ENCODE measurements at regions of chr15 and their contacts with region 1.

Region 1: DNA sequence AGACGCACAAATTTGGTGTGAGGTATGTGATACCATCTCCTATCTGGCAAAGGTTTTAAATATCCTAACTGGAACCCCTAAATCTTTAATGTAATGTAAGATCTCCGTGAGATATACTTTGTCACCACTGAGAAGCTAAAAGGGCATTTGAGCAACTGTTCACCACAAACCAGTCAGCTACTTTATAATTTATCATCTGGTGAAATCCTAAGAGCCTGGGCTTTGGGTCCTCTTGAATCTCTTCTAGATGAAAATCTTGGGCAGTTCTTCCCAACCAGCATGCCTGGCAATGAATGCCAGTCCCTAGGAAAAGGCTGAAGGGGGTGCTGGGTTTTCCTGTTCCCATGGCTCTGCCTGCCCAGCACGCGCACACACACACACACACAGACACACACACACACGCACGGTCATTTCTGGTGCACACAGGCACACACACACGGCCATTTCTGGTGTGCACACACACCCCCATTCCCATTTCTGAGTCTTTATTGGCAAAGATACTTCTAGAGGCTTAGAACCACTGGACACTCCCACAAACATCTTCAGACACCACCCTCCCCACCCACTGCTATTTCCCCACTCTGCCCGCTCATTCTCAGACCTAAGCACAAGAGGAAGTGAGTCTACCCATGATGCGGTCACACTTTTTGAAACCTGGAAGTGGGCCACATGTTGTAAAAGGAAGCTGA is 72.6 kb downstream of the MYO1E start:
- DNase-seq: peak; percentile 34 to 79 (median 62)
- ATAC-seq: peak; percentile 95 to 99 (median 98)
- H3K4me3 ChIP-seq: peak overlapping the region in 1 of 2 donors; percentile 4
- H3K4me3 Mint-ChIP-seq: peak overlapping the region; percentile 29 to 75 (median 50)
- H3K27ac ChIP-seq: peak overlapping the region; percentile 25
- H3K27ac Mint-ChIP-seq: peak overlapping the region; percentile 24 to 46
- H3K4me1 ChIP-seq: peaks cover 9 to 22% of the 10 kb centered on the region in 2 experiments
- H3K4me1 Mint-ChIP-seq: peaks cover 29 to 40% (median 38%) of the 10 kb centered on the region in 3 donors
- H3K27me3 ChIP-seq: no peaks in the 10 kb centered on the region
- H3K27me3 Mint-ChIP-seq: peaks cover 0 to under 1% of the 10 kb centered on the region in 2 donors

Region 2: DNA sequence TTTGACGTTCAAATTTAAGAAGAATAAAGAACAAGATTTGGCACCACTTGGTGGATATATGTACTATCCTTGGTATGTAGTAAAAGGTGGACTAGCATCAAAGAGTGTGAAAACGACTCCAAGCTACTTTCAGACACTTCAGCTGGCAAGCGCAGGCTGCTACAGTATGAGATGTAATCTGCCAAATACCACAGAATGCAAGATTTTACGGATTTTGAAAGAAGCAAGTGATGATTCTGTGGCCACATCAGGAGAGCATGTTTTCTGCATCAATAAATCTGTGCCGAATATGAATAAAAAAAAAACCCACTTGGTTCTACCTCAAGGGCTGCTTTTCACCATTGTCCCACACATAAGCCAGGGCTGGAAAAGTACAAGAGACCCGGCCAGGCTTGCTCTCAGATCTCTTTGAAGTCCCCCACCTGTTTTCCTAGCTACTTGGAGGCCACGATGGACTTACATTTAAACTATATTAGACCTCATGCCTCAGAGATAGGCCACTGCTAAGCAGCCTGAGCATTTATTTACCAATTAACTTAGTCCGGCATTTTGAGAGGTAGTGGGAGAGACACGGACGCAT is 35.2 kb after region 1 on chr15:
- CTCF ChIA-PET with region 1: interaction called, 3 to 12 read pairs
- POLR2A ChIA-PET with region 1: no interaction called
- DNase-seq: no peak
- ATAC-seq: no peak
- H3K4me3 ChIP-seq: no peak overlapping the region
- H3K4me3 Mint-ChIP-seq: no peak overlapping the region
- H3K27ac ChIP-seq: no peak overlapping the region
- H3K27ac Mint-ChIP-seq: no peak overlapping the region
- H3K4me1 ChIP-seq: no peaks in the 10 kb centered on the region
- H3K4me1 Mint-ChIP-seq: no peaks in the 10 kb centered on the region
- H3K27me3 ChIP-seq: peaks cover 0 to 3% of the 10 kb centered on the region in 2 experiments
- H3K27me3 Mint-ChIP-seq: peaks cover 2 to 3% of the 10 kb centered on the region in 2 donors

Measured in T-cell (primary cell).